PC-9 (cell line): ENCODE measurements at regions of chr3 and their contacts with region 1.

Region 1: GRCh38 chr3:129183569-129184395 is at the start of gene CNBP:
- DNase-seq: peak; percentile 84 to 94
- H3K4me3 ChIP-seq: peak within 1 kb of the TSS; percentile 73
- H3K27ac ChIP-seq: peak within 1 kb of the TSS; percentile 79
- H3K4me1 ChIP-seq: peaks cover 45% of the 10 kb centered on the region
- H3K27me3 ChIP-seq: no peaks in the 10 kb centered on the region
- CTCF ChIP-seq: no peak
- total RNA-seq, gene CNBP: 261 and 265 TPM in 2 replicates

Region 2: GRCh38 chr3:129224984-129225393 is 41.2 kb after region 1 on chr3:
- CTCF ChIA-PET with region 1: interaction called, 3 read pairs
- POLR2A ChIA-PET with region 1: interaction called, 16 read pairs
- intact Hi-C with region 1: loop called (anchors 5 kb)
- DNase-seq: peak; percentile 74 to 88
- H3K4me3 ChIP-seq: peak overlapping the region; percentile 31
- H3K27ac ChIP-seq: peak overlapping the region; percentile 88
- H3K4me1 ChIP-seq: peaks cover 52% of the 10 kb centered on the region
- H3K27me3 ChIP-seq: no peaks in the 10 kb centered on the region
- CTCF ChIP-seq: no peak